Activated CD4-positive, alpha-beta T cell treated with anti-CD3 and anti-CD28 coated beads, Interleukin-2, amount 10 ng/mL, durations not matched to agents 7 days and 5 days (primary cell): ENCODE measurements at regions of chr11 and their contacts with region 1.

Region 1: GRCh38 chr11:78417888-78418583 is 416 bp upstream of the GAB2 start:
- DNase-seq: peak; percentile 78
- H3K4me3 Mint-ChIP-seq: peak overlapping the region; percentile 75
- H3K27ac Mint-ChIP-seq: peak overlapping the region; percentile 91
- H3K4me1 Mint-ChIP-seq: peaks cover 52% of the 10 kb centered on the region
- H3K27me3 Mint-ChIP-seq: peaks cover 19% of the 10 kb centered on the region

Region 2: GRCh38 chr11:77542296-77542695 is 875.7 kb before region 1 on chr11:
- CTCF ChIA-PET with region 1: no interaction called
- POLR2A ChIA-PET with region 1: no interaction called
- DNase-seq: no peak
- H3K4me3 Mint-ChIP-seq: no peak overlapping the region
- H3K27ac Mint-ChIP-seq: no peak overlapping the region
- H3K4me1 Mint-ChIP-seq: no peaks in the 10 kb centered on the region
- H3K27me3 Mint-ChIP-seq: peaks cover 3% of the 10 kb centered on the region

Region 3: DNA sequence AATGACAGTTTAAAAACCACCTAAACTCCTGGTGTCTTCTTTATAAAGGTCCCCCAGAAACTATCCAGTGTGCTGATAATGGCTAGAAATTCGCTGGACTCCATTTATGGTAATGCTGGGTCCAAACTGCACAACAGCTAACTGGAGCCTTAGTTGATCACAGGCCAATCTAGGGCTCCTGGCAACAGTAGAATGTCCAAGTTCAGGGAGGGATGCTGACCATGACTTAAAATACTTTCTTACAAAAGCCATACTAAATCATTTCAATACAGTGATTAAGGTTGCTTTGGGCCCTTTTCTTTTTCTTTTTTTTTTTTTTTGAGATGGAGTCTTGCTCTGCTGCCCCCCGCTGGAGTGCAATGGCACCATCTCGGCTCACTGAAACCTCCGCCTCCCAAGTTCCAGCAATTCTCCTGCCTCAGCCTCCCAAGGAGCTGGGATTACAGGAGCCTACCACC is 14.1 kb after region 1 on chr11:
- CTCF ChIA-PET with region 1: interaction called, 17 read pairs
- POLR2A ChIA-PET with region 1: interaction called, 3 read pairs
- DNase-seq: peak; percentile 14
- H3K4me3 Mint-ChIP-seq: no peak overlapping the region
- H3K27ac Mint-ChIP-seq: no peak overlapping the region
- H3K4me1 Mint-ChIP-seq: peaks cover 32% of the 10 kb centered on the region
- H3K27me3 Mint-ChIP-seq: no peaks in the 10 kb centered on the region

Region 4: GRCh38 chr11:78497293-78497692 is 79.3 kb after region 1 on chr11:
- CTCF ChIA-PET with region 1: no interaction called
- POLR2A ChIA-PET with region 1: no interaction called
- DNase-seq: no peak
- H3K4me3 Mint-ChIP-seq: no peak overlapping the region
- H3K27ac Mint-ChIP-seq: no peak overlapping the region
- H3K4me1 Mint-ChIP-seq: peaks cover 7% of the 10 kb centered on the region
- H3K27me3 Mint-ChIP-seq: no peaks in the 10 kb centered on the region